ENCODE measurements at regions of chr16 and their contacts with region 1.

Region 1: DNA sequence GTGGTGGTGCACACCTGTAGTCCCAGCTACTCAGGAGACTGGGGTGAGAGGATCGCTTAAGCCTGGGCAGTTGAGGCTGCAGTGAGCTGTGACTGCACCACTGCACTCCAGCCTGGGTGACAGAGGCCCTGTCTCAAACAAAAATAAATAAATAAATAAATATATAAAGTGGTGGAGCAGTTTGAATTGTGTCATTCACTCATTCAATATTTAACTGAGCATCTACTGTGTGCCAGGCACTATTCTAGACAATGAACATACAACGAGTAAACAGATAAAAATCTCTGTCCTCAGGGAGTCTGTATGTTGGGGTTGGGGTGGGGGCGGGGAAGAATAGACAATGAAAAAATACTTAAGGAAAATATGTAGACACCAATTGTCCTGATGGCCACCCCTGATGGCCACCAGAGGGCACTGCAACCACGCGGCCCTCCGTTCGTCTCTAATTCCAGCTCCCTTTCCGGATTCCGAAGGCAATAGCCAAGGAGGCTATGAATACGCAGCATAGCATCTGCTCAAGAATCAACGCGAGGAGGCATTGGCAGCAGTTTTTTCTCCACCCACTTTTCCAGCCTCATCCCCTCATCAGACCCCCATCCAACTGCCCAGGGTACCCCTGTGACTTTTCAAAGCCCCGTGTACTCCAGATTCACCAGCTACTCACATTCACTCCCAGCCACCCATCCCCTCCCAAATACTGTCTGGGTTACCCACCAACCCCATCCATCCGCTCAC is 21.4 kb downstream of the QPRT start:
- DNase-seq: peak; percentile 83
- ATAC-seq: peak; percentile 66
- H3K4me3 Mint-ChIP-seq: no peak overlapping the region
- H3K27ac Mint-ChIP-seq: no peak overlapping the region
- H3K4me1 Mint-ChIP-seq: peaks cover 38% of the 10 kb centered on the region
- H3K27me3 Mint-ChIP-seq: no peaks in the 10 kb centered on the region
- CTCF ChIP-seq: peak; percentile 87

Region 2: GRCh38 chr16:29686740-29687332 is 13.6 kb before region 1 on chr16:
- CTCF ChIA-PET with region 1: interaction called, 73 read pairs
- POLR2A ChIA-PET with region 1: interaction called, 5 read pairs
- DNase-seq: no peak
- ATAC-seq: no peak
- H3K4me3 Mint-ChIP-seq: no peak overlapping the region
- H3K27ac Mint-ChIP-seq: peak overlapping the region; percentile 71; the same call in 1 of the 2 replicates
- H3K4me1 Mint-ChIP-seq: peaks cover 30% of the 10 kb centered on the region
- H3K27me3 Mint-ChIP-seq: no peaks in the 10 kb centered on the region
- CTCF ChIP-seq: no peak

Region 3: GRCh38 chr16:29720699-29721098 is 20.3 kb after region 1 on chr16:
- CTCF ChIA-PET with region 1: interaction called, 17 read pairs
- POLR2A ChIA-PET with region 1: interaction called, 3 read pairs
- DNase-seq: no peak
- ATAC-seq: no peak
- H3K4me3 Mint-ChIP-seq: no peak overlapping the region
- H3K27ac Mint-ChIP-seq: peak overlapping the region; percentile 89; the same call in 1 of the 2 replicates
- H3K4me1 Mint-ChIP-seq: peaks cover 58% of the 10 kb centered on the region
- H3K27me3 Mint-ChIP-seq: no peaks in the 10 kb centered on the region
- CTCF ChIP-seq: no peak

Region 4: GRCh38 chr16:29784901-29785500 is 84.6 kb after region 1 on chr16:
- CTCF ChIA-PET with region 1: interaction called, 30 read pairs
- POLR2A ChIA-PET with region 1: interaction called, 4 read pairs
- DNase-seq: peak; percentile 94
- ATAC-seq: peak; percentile 95
- H3K4me3 Mint-ChIP-seq: peak overlapping the region; percentile 57
- H3K27ac Mint-ChIP-seq: no peak overlapping the region
- H3K4me1 Mint-ChIP-seq: peaks cover 26% of the 10 kb centered on the region
- H3K27me3 Mint-ChIP-seq: peaks cover 53% of the 10 kb centered on the region
- CTCF ChIP-seq: peak; percentile 69

Region 5: GRCh38 chr16:29815793-29816693 is 115.6 kb after region 1 on chr16 and contains the start of gene PAGR1:
- CTCF ChIA-PET with region 1: interaction called, 32 read pairs
- POLR2A ChIA-PET with region 1: no interaction called
- DNase-seq: peak; percentile 98
- ATAC-seq: peak; percentile 56
- H3K4me3 Mint-ChIP-seq: peak within 1 kb of the TSS; percentile 94
- H3K27ac Mint-ChIP-seq: peak within 1 kb of the TSS; percentile 100
- H3K4me1 Mint-ChIP-seq: peaks cover 56% of the 10 kb centered on the region
- H3K27me3 Mint-ChIP-seq: no peaks in the 10 kb centered on the region; the same call in 1 of the 2 replicates
- CTCF ChIP-seq: peak; percentile 81
- total RNA-seq, gene PAGR1: 60.1 to 69.0 TPM (median 66.8 TPM) in 3 replicates

Region 6: DNA sequence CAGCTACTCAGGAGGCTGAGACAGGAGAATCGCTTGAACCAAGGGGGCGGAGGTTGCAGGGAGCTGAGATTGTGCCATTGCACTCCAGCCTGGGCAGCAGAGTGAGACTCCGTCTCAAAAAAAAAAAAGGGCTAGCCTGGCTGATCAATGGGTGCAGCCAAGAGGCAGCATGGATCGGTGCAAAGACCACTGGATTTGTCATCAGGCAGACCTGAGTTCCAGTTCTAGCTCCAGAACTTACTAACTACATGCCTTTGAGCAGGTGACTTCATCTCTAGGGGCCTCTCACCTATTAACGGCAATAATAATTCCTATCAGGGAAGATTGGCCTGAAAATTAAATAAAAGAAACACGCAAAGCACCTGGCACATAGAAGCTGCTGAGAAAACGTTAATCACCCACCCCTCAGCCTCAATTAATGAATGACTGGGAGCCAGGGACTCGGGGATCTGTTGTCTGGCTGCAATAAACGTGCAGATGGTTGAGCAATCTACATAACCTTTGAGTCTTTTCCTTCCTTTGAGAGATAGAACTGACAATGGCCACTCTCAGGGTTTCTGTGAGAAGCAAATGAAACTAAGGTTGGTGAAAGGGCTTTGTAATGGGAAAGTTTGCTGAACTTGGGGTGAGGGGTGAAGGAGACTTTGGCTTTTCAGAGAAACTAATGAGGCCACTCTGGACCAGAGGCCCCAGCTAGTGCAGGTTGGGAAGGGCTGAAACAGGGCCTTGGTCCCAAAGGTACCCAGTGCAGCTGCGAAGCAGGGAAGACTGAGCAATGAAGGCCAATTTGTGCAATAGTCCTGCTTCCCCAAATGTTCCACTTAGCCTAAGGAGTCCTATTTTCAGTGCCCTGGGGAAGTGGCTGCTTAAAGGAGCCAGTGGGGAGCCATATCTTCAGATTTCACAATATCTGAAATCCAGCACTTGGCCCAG is 191.4 kb after region 1 on chr16:
- CTCF ChIA-PET with region 1: no interaction called
- POLR2A ChIA-PET with region 1: no interaction called
- DNase-seq: no peak
- ATAC-seq: peak; percentile 68
- H3K4me3 Mint-ChIP-seq: no peak overlapping the region
- H3K27ac Mint-ChIP-seq: peak overlapping the region; percentile 92
- H3K4me1 Mint-ChIP-seq: peaks cover 12% of the 10 kb centered on the region
- H3K27me3 Mint-ChIP-seq: no peaks in the 10 kb centered on the region
- CTCF ChIP-seq: no peak

Region 7: DNA sequence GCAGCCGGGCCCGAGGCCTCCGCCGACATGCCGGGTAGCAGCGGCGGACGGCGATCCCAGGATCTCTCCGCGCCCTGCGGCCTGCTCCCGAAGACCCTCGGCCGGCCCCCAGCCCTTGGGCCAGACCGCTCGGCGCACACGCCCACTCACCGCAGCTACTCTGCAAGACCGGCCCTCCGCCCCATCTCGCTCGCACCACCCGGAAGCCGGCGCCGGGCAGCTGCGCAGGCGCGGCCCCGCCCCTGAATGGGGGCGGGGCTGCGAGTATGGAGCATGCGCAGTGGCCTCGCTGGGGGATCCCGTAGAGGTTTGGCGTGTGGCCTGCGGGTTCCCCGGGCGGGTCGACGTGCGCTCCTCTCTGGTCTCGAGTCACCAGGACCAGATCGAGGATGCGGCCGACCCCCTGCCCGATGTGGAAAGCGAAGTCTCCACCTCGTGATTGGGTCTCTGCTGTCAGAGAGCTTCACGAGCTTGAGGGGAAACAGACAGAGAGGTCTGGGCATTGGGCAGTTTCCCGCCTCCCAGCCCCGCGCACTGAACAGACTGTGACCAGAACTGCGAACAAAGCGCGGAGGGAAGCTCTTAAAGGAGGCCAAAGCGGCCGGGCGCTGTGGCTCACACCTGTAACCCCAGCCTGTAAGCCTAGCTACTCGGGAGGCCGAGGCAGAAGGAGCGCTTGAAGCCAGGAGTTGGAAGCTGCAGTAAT is 225.7 kb after region 1 on chr16 and contains the start of gene KCTD13:
- CTCF ChIA-PET with region 1: interaction called, 10 read pairs
- POLR2A ChIA-PET with region 1: no interaction called
- DNase-seq: peak; percentile 91
- ATAC-seq: peak; percentile 95
- H3K4me3 Mint-ChIP-seq: peak within 1 kb of the TSS; percentile 93
- H3K27ac Mint-ChIP-seq: peak within 1 kb of the TSS; percentile 97
- H3K4me1 Mint-ChIP-seq: peaks cover 18% of the 10 kb centered on the region
- H3K27me3 Mint-ChIP-seq: no peaks in the 10 kb centered on the region; the same call in 1 of the 2 replicates
- CTCF ChIP-seq: no peak
- total RNA-seq, gene KCTD13: 18.5 to 20.9 TPM (median 19.4 TPM) in 3 replicates